Activated naive CD4-positive, alpha-beta T cell treated with anti-CD3 and anti-CD28 coated beads for 36 hours (primary cell): ENCODE measurements at regions of chr6 and their contacts with region 1.

Region 1: GRCh38 chr6:188821-189655 is 103.2 kb upstream of the DUSP22 start:
- DNase-seq: peak; percentile 94
- H3K4me3 Mint-ChIP-seq: no peak overlapping the region
- H3K27ac Mint-ChIP-seq: peak overlapping the region; percentile 69
- H3K4me1 Mint-ChIP-seq: peaks cover 49% of the 10 kb centered on the region
- H3K27me3 Mint-ChIP-seq: peaks cover 1% of the 10 kb centered on the region

Region 2: DNA sequence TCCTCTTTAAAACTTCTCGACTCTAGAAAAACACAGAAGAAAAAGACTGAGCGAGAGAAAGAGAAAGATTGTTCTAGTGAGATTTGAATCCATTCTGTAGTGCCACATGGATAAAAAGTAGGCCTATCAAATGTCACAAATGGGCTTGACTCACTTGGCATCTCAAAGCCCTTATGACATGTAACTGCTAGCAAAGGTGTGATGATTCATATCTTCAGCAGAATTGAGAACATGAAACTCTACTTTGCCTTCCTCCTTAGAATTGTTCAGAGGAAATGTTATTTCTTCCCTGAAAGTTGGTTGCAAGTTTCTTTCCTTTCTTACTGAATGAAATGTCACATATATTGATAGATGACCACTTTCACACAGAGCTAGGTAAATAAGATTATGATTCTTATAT is 62.9 kb after region 1 on chr6:
- CTCF ChIA-PET with region 1: no interaction called
- intact Hi-C with region 1: loop called (anchors 1 kb)
- DNase-seq: no peak
- H3K4me3 Mint-ChIP-seq: no peak overlapping the region
- H3K27ac Mint-ChIP-seq: peak overlapping the region; percentile 63
- H3K4me1 Mint-ChIP-seq: peaks cover 43% of the 10 kb centered on the region
- H3K27me3 Mint-ChIP-seq: no peaks in the 10 kb centered on the region

Region 3: GRCh38 chr6:391559-392440 is 202.8 kb after region 1 on chr6 and contains the start of gene IRF4:
- CTCF ChIA-PET with region 1: interaction called, 4 read pairs
- intact Hi-C with region 1: loop called (anchors 1 kb)
- DNase-seq: peak; percentile 70
- H3K4me3 Mint-ChIP-seq: peak within 1 kb of the TSS; percentile 93
- H3K27ac Mint-ChIP-seq: peak within 1 kb of the TSS; percentile 95
- H3K4me1 Mint-ChIP-seq: peaks cover 44% of the 10 kb centered on the region
- H3K27me3 Mint-ChIP-seq: peaks cover 4% of the 10 kb centered on the region
- total RNA-seq, gene IRF4: 500 to 504 TPM

Region 4: DNA sequence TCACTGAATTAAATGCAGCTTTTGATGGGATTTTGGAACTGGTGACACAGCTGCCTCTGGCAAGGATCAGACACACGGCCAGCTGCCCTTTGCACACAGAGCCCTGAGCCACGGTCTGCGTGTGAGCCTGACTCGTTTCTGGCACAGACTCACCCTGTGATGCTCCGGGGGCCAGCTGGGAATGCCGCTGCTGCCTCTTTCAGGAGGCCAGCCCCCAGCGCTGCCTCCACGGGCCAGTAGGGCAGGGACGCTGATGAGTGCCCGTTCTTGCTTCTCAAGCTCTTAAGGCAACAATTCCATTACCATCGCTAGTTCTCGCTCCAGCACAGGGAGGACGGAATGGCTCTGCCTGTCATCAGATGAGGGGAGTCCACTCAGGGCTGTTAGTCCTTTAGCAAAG is 264.1 kb after region 1 on chr6:
- CTCF ChIA-PET with region 1: no interaction called
- intact Hi-C with region 1: no loop called
- DNase-seq: no peak
- H3K4me3 Mint-ChIP-seq: no peak overlapping the region
- H3K27ac Mint-ChIP-seq: no peak overlapping the region
- H3K4me1 Mint-ChIP-seq: peaks cover 28% of the 10 kb centered on the region
- H3K27me3 Mint-ChIP-seq: no peaks in the 10 kb centered on the region

Region 5: DNA sequence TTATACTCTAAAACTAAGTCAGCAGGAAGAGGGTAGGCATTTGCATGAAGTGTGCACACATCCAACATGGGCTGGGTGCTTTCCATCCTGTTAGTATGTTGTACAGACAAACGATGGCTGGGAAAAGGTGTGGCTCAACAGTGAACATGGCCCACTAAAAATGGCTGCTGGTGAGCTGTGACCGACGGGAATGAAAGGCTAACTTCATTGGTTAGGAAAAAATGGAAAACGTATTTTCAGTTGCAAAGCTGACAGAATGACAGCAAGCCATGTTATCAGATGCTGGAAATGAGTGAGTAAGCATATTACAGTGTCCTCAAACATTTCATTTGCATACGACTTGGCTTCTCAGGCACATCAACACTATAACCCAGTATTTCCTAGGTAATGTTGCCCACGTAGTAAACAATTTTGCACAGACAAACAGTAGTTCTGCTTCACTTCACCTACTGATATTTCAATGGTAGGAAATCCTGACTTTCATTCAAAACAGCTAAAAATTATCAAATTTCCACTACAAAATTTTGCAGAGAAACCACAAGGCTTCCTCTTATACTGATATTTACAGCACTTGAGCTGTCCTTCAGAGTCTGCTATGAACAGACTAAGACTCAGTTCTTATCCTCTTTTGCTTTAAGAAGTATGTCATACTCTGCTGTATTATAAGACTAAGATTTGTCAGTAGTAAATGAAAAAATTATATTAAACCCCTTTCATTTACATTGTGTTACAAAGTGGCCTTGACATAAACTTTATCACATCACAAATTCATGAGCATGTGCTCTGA is 301.4 kb after region 1 on chr6:
- CTCF ChIA-PET with region 1: no interaction called
- intact Hi-C with region 1: loop called (anchors 2 kb)
- DNase-seq: peak; percentile 80
- H3K4me3 Mint-ChIP-seq: peak overlapping the region; percentile 41
- H3K27ac Mint-ChIP-seq: peak overlapping the region; percentile 95
- H3K4me1 Mint-ChIP-seq: peaks cover 94% of the 10 kb centered on the region
- H3K27me3 Mint-ChIP-seq: no peaks in the 10 kb centered on the region

Region 6: DNA sequence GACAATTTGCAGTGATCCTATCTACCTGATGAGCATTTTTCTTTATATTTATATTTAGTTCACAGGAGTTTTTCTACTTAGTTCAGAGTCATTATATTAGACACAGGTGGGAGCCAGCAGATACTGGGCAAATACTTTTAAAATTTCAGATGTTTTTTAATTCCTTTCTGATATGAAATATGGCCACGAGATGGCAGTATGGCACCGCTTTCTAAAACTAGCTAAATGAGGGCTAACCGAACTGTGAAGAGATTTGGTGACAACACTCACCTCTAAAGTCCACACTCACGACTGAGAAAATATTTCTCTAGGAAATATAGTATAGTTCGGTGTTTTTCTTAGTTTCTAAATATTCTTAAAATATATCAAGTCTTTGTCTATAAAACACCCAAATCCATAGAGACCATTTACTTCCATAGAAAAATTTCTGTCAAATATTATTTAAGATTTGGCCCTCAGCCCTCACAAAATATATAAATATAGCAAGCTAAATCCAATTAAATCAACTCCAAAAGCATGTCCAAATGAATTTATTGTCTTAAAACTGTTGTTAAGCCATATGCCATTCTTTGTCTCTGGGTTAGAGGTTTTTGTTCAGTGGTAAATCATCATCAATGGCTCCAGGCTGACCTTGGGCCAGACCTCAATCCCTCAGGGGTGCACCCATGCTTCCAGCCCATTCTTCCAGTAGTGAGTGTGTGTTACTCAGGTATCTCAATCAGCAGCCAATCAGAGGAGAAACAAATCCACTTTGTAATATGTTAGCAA is 404.3 kb after region 1 on chr6:
- CTCF ChIA-PET with region 1: interaction called, 7 read pairs
- intact Hi-C with region 1: loop called (anchors 1 kb)
- DNase-seq: peak; percentile 87
- H3K4me3 Mint-ChIP-seq: no peak overlapping the region
- H3K27ac Mint-ChIP-seq: no peak overlapping the region
- H3K4me1 Mint-ChIP-seq: peaks cover 11% of the 10 kb centered on the region
- H3K27me3 Mint-ChIP-seq: no peaks in the 10 kb centered on the region

Region 7: DNA sequence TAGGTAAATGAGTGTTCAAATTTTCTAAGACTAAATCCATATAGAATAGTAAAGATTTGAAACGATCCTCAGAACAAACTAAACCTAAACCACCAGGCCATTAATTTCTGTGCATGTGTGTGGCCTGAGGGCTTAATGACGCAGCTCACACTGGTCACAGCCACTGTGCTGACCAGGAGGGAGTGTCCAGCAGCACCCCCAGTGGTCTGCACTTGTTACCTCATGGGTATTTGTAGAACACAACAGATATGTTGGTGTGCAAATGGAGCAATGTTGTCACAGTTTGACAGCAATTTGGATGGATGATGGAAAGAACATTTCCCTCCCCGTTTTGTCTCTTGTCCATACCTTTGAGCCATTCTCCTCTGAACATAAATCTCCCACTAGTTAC is 626.3 kb after region 1 on chr6:
- CTCF ChIA-PET with region 1: no interaction called
- intact Hi-C with region 1: loop called (anchors 5 kb)
- DNase-seq: no peak
- H3K4me3 Mint-ChIP-seq: no peak overlapping the region
- H3K27ac Mint-ChIP-seq: no peak overlapping the region
- H3K4me1 Mint-ChIP-seq: peaks cover 25% of the 10 kb centered on the region
- H3K27me3 Mint-ChIP-seq: peaks cover 7% of the 10 kb centered on the region